ENCODE measurements at regions of chr2 and their contacts with region 1.

Region 1: GRCh38 chr2:164480570-164480969 is 140.7 kb downstream of the GRB14 start:
- DNase-seq: no peak
- H3K4me3 ChIP-seq: no peak overlapping the region
- H3K27ac ChIP-seq: no peak overlapping the region
- H3K4me1 ChIP-seq: no peaks in the 10 kb centered on the region
- H3K27me3 ChIP-seq: no peaks in the 10 kb centered on the region
- CTCF ChIP-seq: no peak
- EP300 ChIP-seq: no peak
- POLR2A ChIP-seq: no peak

Region 2: DNA sequence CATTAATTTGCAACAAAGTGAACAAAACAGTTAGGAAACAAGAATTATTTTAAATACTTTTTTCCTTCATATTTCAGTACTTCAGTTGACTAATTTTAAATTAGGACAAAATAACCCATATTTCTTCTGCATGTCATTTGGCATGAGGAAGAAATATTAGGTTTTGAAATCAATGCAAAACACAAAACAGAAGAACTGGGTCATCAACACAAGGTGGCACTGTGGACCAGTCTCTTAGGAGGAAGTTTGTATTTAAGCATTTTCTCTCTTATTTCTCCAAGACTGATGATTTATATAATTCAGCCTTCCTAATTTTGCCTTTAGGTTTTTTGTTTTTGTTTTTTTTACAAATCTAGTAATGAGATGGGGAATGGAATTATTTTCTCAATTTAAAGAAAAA is 1289.2 kb before region 1 on chr2:
- intact Hi-C with region 1: loop called (anchors 5 kb)
- DNase-seq: no peak
- H3K4me3 ChIP-seq: no peak overlapping the region
- H3K27ac ChIP-seq: no peak overlapping the region
- H3K4me1 ChIP-seq: no peaks in the 10 kb centered on the region
- H3K27me3 ChIP-seq: no peaks in the 10 kb centered on the region
- CTCF ChIP-seq: peak in 1 of 4 experiments; percentile 26
- EP300 ChIP-seq: no peak
- POLR2A ChIP-seq: no peak

Region 3: DNA sequence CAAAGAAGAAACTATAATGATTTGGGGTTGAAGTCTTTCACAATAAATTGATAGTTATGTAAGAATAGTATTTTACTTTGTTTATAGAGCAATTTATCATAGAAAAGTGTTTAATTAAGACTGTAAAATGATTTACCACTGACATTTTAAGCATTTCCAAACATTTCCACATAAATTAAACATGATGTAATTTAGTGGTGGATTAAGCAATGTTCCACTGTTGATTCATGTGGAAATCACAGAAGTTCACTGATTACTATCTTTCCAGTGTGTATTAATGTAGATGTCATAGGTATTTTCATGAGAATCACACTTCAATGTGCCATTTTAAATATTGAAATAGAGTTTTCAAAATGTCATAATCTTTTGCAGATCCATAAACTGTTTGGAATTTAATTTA is 180.8 kb after region 1 on chr2:
- intact Hi-C with region 1: no loop called
- DNase-seq: no peak
- H3K4me3 ChIP-seq: no peak overlapping the region
- H3K27ac ChIP-seq: peak overlapping the region in 1 of 4 donors; percentile 4
- H3K4me1 ChIP-seq: peaks cover 0 to 17% (median 4%) of the 10 kb centered on the region in 4 donors
- H3K27me3 ChIP-seq: no peaks in the 10 kb centered on the region
- CTCF ChIP-seq: no peak
- EP300 ChIP-seq: no peak
- POLR2A ChIP-seq: no peak

Region 4: GRCh38 chr2:165239856-165240515 is 759.4 kb after region 1 on chr2:
- intact Hi-C with region 1: no loop called
- DNase-seq: no peak
- H3K4me3 ChIP-seq: no peak overlapping the region
- H3K27ac ChIP-seq: no peak overlapping the region
- H3K4me1 ChIP-seq: no peaks in the 10 kb centered on the region
- H3K27me3 ChIP-seq: no peaks in the 10 kb centered on the region
- CTCF ChIP-seq: no peak
- EP300 ChIP-seq: no peak
- POLR2A ChIP-seq: no peak

Measured in sigmoid colon (tissue), 7 donors.